Posterior vena cava (tissue), 2 donors: ENCODE measurements at regions of chr6 and their contacts with region 1.

Region 1: GRCh38 chr6:76026101-76026500 is 46.4 kb downstream of the IMPG1 start:
- DNase-seq: no peak

Region 2: DNA sequence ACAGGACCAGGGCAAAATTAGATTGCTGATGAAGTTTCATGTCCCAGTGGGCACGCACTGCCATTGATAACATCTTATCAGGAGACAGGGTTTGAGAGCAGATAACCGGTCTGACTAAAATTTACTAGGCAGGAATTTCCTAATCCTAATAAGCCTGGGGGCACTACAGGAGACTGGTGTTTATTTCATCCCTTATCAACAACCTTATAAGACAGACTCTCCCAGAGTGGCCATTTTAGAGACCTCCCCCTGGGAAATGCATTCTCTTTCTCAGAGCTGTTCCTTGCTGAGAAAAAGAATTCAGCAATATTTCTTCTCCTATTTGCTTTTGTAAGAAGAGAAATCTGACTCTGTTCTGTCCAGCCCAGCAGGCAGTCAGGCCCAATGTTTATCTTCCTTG is 469.8 kb after region 1 on chr6:
- intact Hi-C with region 1: no loop called
- DNase-seq: no peak

Region 3: DNA sequence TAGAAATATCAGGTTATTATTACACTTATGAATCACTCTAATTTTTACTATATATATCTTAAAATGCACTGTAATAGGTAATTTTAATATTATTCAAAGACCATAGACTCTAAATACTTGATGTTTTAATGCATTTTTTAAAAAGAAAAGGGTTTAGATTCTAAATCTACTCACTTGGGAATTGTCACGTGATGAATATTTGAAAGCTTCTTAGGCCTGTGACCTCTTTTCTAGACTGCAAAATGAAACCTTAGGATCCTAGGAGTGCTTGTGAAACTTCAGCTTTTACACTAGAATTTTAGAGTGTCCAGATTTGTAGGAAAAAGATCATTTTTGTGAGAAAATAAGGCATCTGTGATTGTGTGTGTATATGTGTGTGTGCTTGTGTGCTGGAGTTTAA is 1119.1 kb after region 1 on chr6:
- intact Hi-C with region 1: loop called in 1 of 2 experiments (anchors 5 kb)
- DNase-seq: no peak